ENCODE measurements at regions of chr11 and their contacts with region 1.

Region 1: GRCh38 chr11:69088676-69089146 is 40.0 kb downstream of the TPCN2 start:
- DNase-seq: no peak
- H3K4me3 ChIP-seq: no peak overlapping the region
- CTCF ChIP-seq: peak; percentile 77

Region 2: GRCh38 chr11:69670158-69670845 is 581.6 kb after region 1 on chr11:
- CTCF ChIA-PET with region 1: interaction called, 12 read pairs
- POLR2A ChIA-PET with region 1: no interaction called
- DNase-seq: peak; percentile 31
- H3K4me3 ChIP-seq: no peak overlapping the region
- CTCF ChIP-seq: peak; percentile 96

Region 3: GRCh38 chr11:69899957-69900821 is 811.5 kb after region 1 on chr11:
- CTCF ChIA-PET with region 1: no interaction called
- POLR2A ChIA-PET with region 1: no interaction called
- DNase-seq: no peak
- H3K4me3 ChIP-seq: no peak overlapping the region
- CTCF ChIP-seq: no peak

Measured in AG04449 (cell line).